Aorta (tissue), 5 donors: ENCODE measurements at regions of chr9 and their contacts with region 1.

Region 1: GRCh38 chr9:133347985-133348717 is at the starts of genes MED22 and RPL7A:
- DNase-seq: peak; percentile 96 to 97
- ATAC-seq: peak; percentile 94
- H3K4me3 ChIP-seq: peak within 1 kb of the TSS; percentile 85 to 93
- H3K27ac ChIP-seq: peak within 1 kb of the TSS; percentile 25 to 79
- H3K4me1 ChIP-seq: peaks cover 0 to 3% of the 10 kb centered on the region in 2 donors
- H3K27me3 ChIP-seq: no peaks in the 10 kb centered on the region
- total RNA-seq, gene MED22: 18.6 to 37.0 TPM
- total RNA-seq, gene RPL7A: 1,304 to 1,328 TPM

Region 2: GRCh38 chr9:133282464-133283238 is 65.5 kb before region 1 on chr9:
- intact Hi-C with region 1: no loop called
- DNase-seq: no peak
- ATAC-seq: no peak
- H3K4me3 ChIP-seq: no peak overlapping the region
- H3K27ac ChIP-seq: no peak overlapping the region
- H3K4me1 ChIP-seq: no peaks in the 10 kb centered on the region
- H3K27me3 ChIP-seq: peaks cover 0 to 3% of the 10 kb centered on the region in 2 donors

Region 3: GRCh38 chr9:134010310-134011173 is 662.4 kb after region 1 on chr9:
- intact Hi-C with region 1: loop called in 1 of 2 experiments (anchors 10 kb)
- DNase-seq: no peak
- ATAC-seq: no peak
- H3K4me3 ChIP-seq: no peak overlapping the region
- H3K27ac ChIP-seq: no peak overlapping the region
- H3K4me1 ChIP-seq: no peaks in the 10 kb centered on the region
- H3K27me3 ChIP-seq: no peaks in the 10 kb centered on the region